ENCODE measurements at regions of chr16 and their contacts with region 1.

Region 1: GRCh38 chr16:70289229-70290098 is at the start of gene AARS1:
- DNase-seq: peak; percentile 97 to 100 (median 98)
- ATAC-seq: peak; percentile 98
- H3K4me3 ChIP-seq: peak within 1 kb of the TSS; percentile 96
- H3K27ac ChIP-seq: peak within 1 kb of the TSS; percentile 100
- H3K4me1 ChIP-seq: peaks cover 9 to 12% of the 10 kb centered on the region in 2 experiments
- H3K27me3 ChIP-seq: no peaks in the 10 kb centered on the region
- CTCF ChIP-seq: no peak
- EP300 ChIP-seq: peak; percentile 85
- POLR2A ChIP-seq: peak; percentile 99
- RAD21 ChIP-seq: no peak
- polyA plus RNA-seq, gene AARS1: 50.1 to 138 TPM

Region 2: GRCh38 chr16:70251629-70252354 is 37.7 kb before region 1 on chr16 and contains the start of gene EXOSC6:
- CTCF ChIA-PET with region 1: no interaction called
- POLR2A ChIA-PET with region 1: interaction called, 25 read pairs
- in situ Hi-C with region 1: no loop called
- intact Hi-C with region 1: no loop called
- DNase-seq: peak; percentile 91 to 96 (median 93)
- ATAC-seq: peak; percentile 91
- H3K4me3 ChIP-seq: peak within 1 kb of the TSS; percentile 85
- H3K27ac ChIP-seq: peak within 1 kb of the TSS; percentile 93
- H3K4me1 ChIP-seq: peaks cover 5 to 20% of the 10 kb centered on the region in 2 experiments; a peak in 4 of 5 replicates
- H3K27me3 ChIP-seq: no peaks in the 10 kb centered on the region
- CTCF ChIP-seq: peak; percentile 91 to 95 (median 92)
- EP300 ChIP-seq: no peak
- POLR2A ChIP-seq: peak; percentile 94
- RAD21 ChIP-seq: no peak
- polyA plus RNA-seq, gene EXOSC6: 9.2 to 11.6 TPM

Region 3: GRCh38 chr16:70276392-70276791 is 13.1 kb before region 1 on chr16:
- CTCF ChIA-PET with region 1: no interaction called
- POLR2A ChIA-PET with region 1: interaction called, 48 read pairs
- in situ Hi-C with region 1: no loop called
- intact Hi-C with region 1: no loop called
- DNase-seq: no peak
- ATAC-seq: no peak
- H3K4me3 ChIP-seq: no peak overlapping the region
- H3K27ac ChIP-seq: no peak overlapping the region
- H3K4me1 ChIP-seq: no peaks in the 10 kb centered on the region; a peak in 1 of 5 replicates
- H3K27me3 ChIP-seq: no peaks in the 10 kb centered on the region
- CTCF ChIP-seq: no peak
- EP300 ChIP-seq: no peak
- POLR2A ChIP-seq: no peak
- RAD21 ChIP-seq: no peak

Region 4: GRCh38 chr16:70324998-70325747 is 35.7 kb after region 1 on chr16:
- CTCF ChIA-PET with region 1: no interaction called
- POLR2A ChIA-PET with region 1: interaction called, 12 read pairs
- in situ Hi-C with region 1: no loop called
- intact Hi-C with region 1: no loop called
- DNase-seq: no peak
- ATAC-seq: no peak
- H3K4me3 ChIP-seq: no peak overlapping the region
- H3K27ac ChIP-seq: no peak overlapping the region
- H3K4me1 ChIP-seq: no peaks in the 10 kb centered on the region; a peak in 2 of 5 replicates
- H3K27me3 ChIP-seq: no peaks in the 10 kb centered on the region
- CTCF ChIP-seq: no peak
- EP300 ChIP-seq: no peak
- POLR2A ChIP-seq: no peak
- RAD21 ChIP-seq: no peak

Region 5: GRCh38 chr16:70523076-70523742 is 233.7 kb after region 1 on chr16 and contains the start of gene COG4:
- CTCF ChIA-PET with region 1: no interaction called
- POLR2A ChIA-PET with region 1: interaction called, 4 read pairs
- in situ Hi-C with region 1: no loop called
- intact Hi-C with region 1: loop called (anchors 10 kb)
- DNase-seq: peak; percentile 88 to 93 (median 90)
- ATAC-seq: peak; percentile 75
- H3K4me3 ChIP-seq: peak within 1 kb of the TSS; percentile 75
- H3K27ac ChIP-seq: peak within 1 kb of the TSS; percentile 89
- H3K4me1 ChIP-seq: peaks cover 2 to 18% of the 10 kb centered on the region in 2 experiments; a peak in 4 of 5 replicates
- H3K27me3 ChIP-seq: no peaks in the 10 kb centered on the region
- CTCF ChIP-seq: no peak
- EP300 ChIP-seq: no peak
- POLR2A ChIP-seq: peak; percentile 93
- RAD21 ChIP-seq: no peak
- polyA plus RNA-seq, gene COG4: 13.7 to 37.4 TPM

Region 6: DNA sequence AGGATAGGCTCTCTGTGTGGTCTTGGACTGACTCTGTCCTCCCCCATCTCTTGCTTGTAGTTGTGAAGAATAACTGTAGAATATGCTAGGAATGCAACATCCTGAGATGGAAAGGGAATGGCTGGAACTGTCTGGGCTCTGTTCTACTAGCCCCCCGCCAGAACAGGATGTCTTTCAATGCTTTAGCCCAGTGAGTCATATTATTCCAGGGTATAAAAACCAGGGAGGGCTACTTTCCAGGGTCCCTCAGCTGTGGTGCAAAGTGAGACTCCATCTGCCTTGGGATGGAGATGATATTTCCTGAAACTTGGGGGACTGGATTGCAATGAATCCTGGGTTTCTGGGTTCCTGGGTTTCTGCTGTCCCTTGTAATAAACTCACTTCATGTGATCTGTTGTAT is 908.9 kb after region 1 on chr16:
- CTCF ChIA-PET with region 1: no interaction called
- POLR2A ChIA-PET with region 1: no interaction called
- in situ Hi-C with region 1: no loop called
- intact Hi-C with region 1: no loop called
- DNase-seq: no peak
- ATAC-seq: no peak
- H3K4me3 ChIP-seq: no peak overlapping the region
- H3K27ac ChIP-seq: no peak overlapping the region
- H3K4me1 ChIP-seq: no peaks in the 10 kb centered on the region
- H3K27me3 ChIP-seq: no peaks in the 10 kb centered on the region
- CTCF ChIP-seq: no peak
- EP300 ChIP-seq: no peak
- POLR2A ChIP-seq: no peak
- RAD21 ChIP-seq: no peak